Activated T-helper 1 cell treated with anti-CD3 and anti-CD28 coated beads, Interleukin-12 subunit alpha, Interleukin-12 subunit beta, Interleukin-2, Interleukin-4 antibody, amounts not matched to agents 30 ng/mL and 10 ng/mL and 1 ng/mL, durations not matched to agents 14 hours and 24 hours and 36 hours (primary cell): ENCODE measurements at regions of chr6 and their contacts with region 1.

Region 1: GRCh38 chr6:68967549-68968300 is 332.6 kb downstream of the ADGRB3 start:
- DNase-seq: peak; percentile 43
- H3K4me3 Mint-ChIP-seq: no peak overlapping the region
- H3K27ac Mint-ChIP-seq: no peak overlapping the region
- H3K4me1 Mint-ChIP-seq: peaks cover 11% of the 10 kb centered on the region
- H3K27me3 Mint-ChIP-seq: peaks cover 2% of the 10 kb centered on the region

Region 2: DNA sequence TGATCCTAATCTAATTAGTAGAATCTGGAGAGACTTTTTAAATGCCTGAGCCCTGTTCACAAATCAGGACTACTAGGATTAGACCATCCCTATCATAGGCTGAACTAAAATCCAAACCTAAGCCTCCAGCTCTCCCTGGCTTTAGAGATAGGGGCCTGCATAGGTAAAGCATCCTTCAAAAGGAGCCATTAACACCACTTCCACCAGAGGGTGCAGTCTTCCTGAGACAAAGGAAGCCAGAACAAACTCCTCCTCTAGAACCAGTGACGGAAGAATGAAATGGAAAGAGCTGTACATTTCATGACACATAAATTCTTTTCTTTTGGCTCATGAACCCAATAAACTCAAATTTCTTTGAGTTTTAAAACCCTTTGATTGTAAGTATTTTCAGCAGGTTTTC is 623.8 kb before region 1 on chr6:
- intact Hi-C with region 1: loop called (anchors 5 kb)
- DNase-seq: no peak
- H3K4me3 Mint-ChIP-seq: no peak overlapping the region
- H3K27ac Mint-ChIP-seq: no peak overlapping the region
- H3K4me1 Mint-ChIP-seq: no peaks in the 10 kb centered on the region
- H3K27me3 Mint-ChIP-seq: no peaks in the 10 kb centered on the region

Region 3: GRCh38 chr6:68634726-68635411 is 332.9 kb before region 1 on chr6 and contains the start of gene ADGRB3:
- intact Hi-C with region 1: loop called (anchors 1 kb)
- DNase-seq: peak; percentile 11
- H3K4me3 Mint-ChIP-seq: peak within 1 kb of the TSS; percentile 80
- H3K27ac Mint-ChIP-seq: peak within 1 kb of the TSS; percentile 31
- H3K4me1 Mint-ChIP-seq: peaks cover 25% of the 10 kb centered on the region
- H3K27me3 Mint-ChIP-seq: peaks cover 49% of the 10 kb centered on the region
- total RNA-seq, gene ADGRB3: not detected in 2 replicates

Region 4: GRCh38 chr6:68876792-68877493 is 90.8 kb before region 1 on chr6:
- intact Hi-C with region 1: loop called (anchors 2 kb)
- DNase-seq: no peak
- H3K4me3 Mint-ChIP-seq: no peak overlapping the region
- H3K27ac Mint-ChIP-seq: no peak overlapping the region
- H3K4me1 Mint-ChIP-seq: no peaks in the 10 kb centered on the region
- H3K27me3 Mint-ChIP-seq: no peaks in the 10 kb centered on the region

Region 5: GRCh38 chr6:68941345-68941744 is 26.4 kb before region 1 on chr6:
- intact Hi-C with region 1: no loop called
- DNase-seq: no peak
- H3K4me3 Mint-ChIP-seq: no peak overlapping the region
- H3K27ac Mint-ChIP-seq: no peak overlapping the region
- H3K4me1 Mint-ChIP-seq: no peaks in the 10 kb centered on the region
- H3K27me3 Mint-ChIP-seq: no peaks in the 10 kb centered on the region